Activated CD4-positive, alpha-beta T cell treated with anti-CD3 and anti-CD28 coated beads for 36 hours (primary cell): ENCODE measurements at regions of chr17 and their contacts with region 1.

Region 1: GRCh38 chr17:82098072-82098821 is at the start of gene FASN:
- DNase-seq: peak; percentile 97
- ATAC-seq: peak; percentile 86
- H3K4me3 Mint-ChIP-seq: peak within 1 kb of the TSS; percentile 78
- H3K27ac Mint-ChIP-seq: peak within 1 kb of the TSS; percentile 19
- H3K4me1 Mint-ChIP-seq: peaks cover 14% of the 10 kb centered on the region
- H3K27me3 Mint-ChIP-seq: no peaks in the 10 kb centered on the region
- total RNA-seq, gene FASN: 239 to 259 TPM

Region 2: DNA sequence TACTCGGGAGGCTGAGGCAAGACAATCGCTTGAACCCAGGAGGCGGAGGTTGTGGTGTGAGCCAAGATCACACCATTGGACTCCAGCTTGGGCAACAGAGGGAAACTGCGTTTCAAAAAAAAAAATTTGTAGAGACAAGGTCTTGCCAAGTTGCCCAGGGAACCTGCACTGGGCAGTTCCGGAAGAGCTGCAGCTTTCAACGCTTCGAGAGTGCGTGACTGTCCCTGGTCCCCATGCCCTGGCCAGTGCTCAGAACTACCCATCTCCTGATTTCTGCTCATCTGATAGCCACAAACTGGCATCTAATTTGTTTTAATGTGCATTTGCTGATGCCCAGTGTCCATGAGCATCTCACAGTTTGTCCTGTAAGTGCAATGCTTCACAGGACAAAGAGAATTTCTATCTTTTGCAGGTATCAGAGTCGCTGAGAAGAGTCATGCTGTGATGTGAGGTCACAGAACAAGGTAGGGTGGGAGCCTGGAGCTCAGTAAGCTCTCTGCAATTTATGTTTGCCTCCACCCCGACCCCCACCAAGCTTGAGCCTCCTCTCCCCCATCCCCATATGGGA is 589.5 kb before region 1 on chr17:
- CTCF ChIA-PET with region 1: no interaction called
- POLR2A ChIA-PET with region 1: no interaction called
- intact Hi-C with region 1: no loop called
- DNase-seq: peak; percentile 22
- ATAC-seq: no peak
- H3K4me3 Mint-ChIP-seq: peak overlapping the region; percentile 97
- H3K27ac Mint-ChIP-seq: peak overlapping the region; percentile 86
- H3K4me1 Mint-ChIP-seq: peaks cover 12% of the 10 kb centered on the region
- H3K27me3 Mint-ChIP-seq: no peaks in the 10 kb centered on the region

Region 3: GRCh38 chr17:81833160-81833920 is 264.9 kb before region 1 on chr17 and contains the start of gene MCRIP1:
- CTCF ChIA-PET with region 1: no interaction called
- POLR2A ChIA-PET with region 1: no interaction called
- intact Hi-C with region 1: loop called in 1 of 2 experiments (anchors 1 kb)
- DNase-seq: peak; percentile 98
- ATAC-seq: peak; percentile 78
- H3K4me3 Mint-ChIP-seq: peak within 1 kb of the TSS; percentile 87
- H3K27ac Mint-ChIP-seq: peak within 1 kb of the TSS; percentile 91
- H3K4me1 Mint-ChIP-seq: peaks cover 17% of the 10 kb centered on the region
- H3K27me3 Mint-ChIP-seq: no peaks in the 10 kb centered on the region
- total RNA-seq, gene MCRIP1: 45.8 to 50.4 TPM

Region 4: GRCh38 chr17:81917565-81918332 is 180.5 kb before region 1 on chr17 and contains the start of gene SIRT7:
- CTCF ChIA-PET with region 1: no interaction called
- POLR2A ChIA-PET with region 1: no interaction called
- intact Hi-C with region 1: loop called in 1 of 2 experiments (anchors 2 kb)
- DNase-seq: peak; percentile 90
- ATAC-seq: peak; percentile 87
- H3K4me3 Mint-ChIP-seq: peak within 1 kb of the TSS; percentile 85
- H3K27ac Mint-ChIP-seq: peak within 1 kb of the TSS; percentile 82
- H3K4me1 Mint-ChIP-seq: peaks cover 23% of the 10 kb centered on the region
- H3K27me3 Mint-ChIP-seq: no peaks in the 10 kb centered on the region
- total RNA-seq, gene SIRT7: 29.3 to 31.8 TPM

Region 5: GRCh38 chr17:82022981-82023374 is 75.3 kb before region 1 on chr17 and contains the start of gene LRRC45:
- CTCF ChIA-PET with region 1: interaction called, 3 read pairs
- POLR2A ChIA-PET with region 1: interaction called, 3 read pairs
- intact Hi-C with region 1: loop called in 1 of 2 experiments (anchors 1 kb)
- DNase-seq: peak; percentile 100
- ATAC-seq: peak; percentile 97
- H3K4me3 Mint-ChIP-seq: peak within 1 kb of the TSS; percentile 84
- H3K27ac Mint-ChIP-seq: peak within 1 kb of the TSS; percentile 76
- H3K4me1 Mint-ChIP-seq: peaks cover 14% of the 10 kb centered on the region
- H3K27me3 Mint-ChIP-seq: no peaks in the 10 kb centered on the region
- total RNA-seq, gene LRRC45: 17.6 to 20.6 TPM

Region 6: GRCh38 chr17:82043507-82043906 is 54.7 kb before region 1 on chr17:
- CTCF ChIA-PET with region 1: no interaction called
- POLR2A ChIA-PET with region 1: no interaction called
- intact Hi-C with region 1: no loop called
- DNase-seq: no peak
- ATAC-seq: no peak
- H3K4me3 Mint-ChIP-seq: no peak overlapping the region
- H3K27ac Mint-ChIP-seq: no peak overlapping the region
- H3K4me1 Mint-ChIP-seq: peaks cover 8% of the 10 kb centered on the region
- H3K27me3 Mint-ChIP-seq: no peaks in the 10 kb centered on the region

Region 7: GRCh38 chr17:82126556-82127314 is 28.5 kb after region 1 on chr17:
- CTCF ChIA-PET with region 1: interaction called, 4 read pairs
- POLR2A ChIA-PET with region 1: interaction called, 5 read pairs
- intact Hi-C with region 1: loop called in 1 of 2 experiments (anchors 1 kb)
- DNase-seq: peak; percentile 85
- ATAC-seq: peak; percentile 92
- H3K4me3 Mint-ChIP-seq: peak overlapping the region; percentile 72
- H3K27ac Mint-ChIP-seq: peak overlapping the region; percentile 98
- H3K4me1 Mint-ChIP-seq: peaks cover 61% of the 10 kb centered on the region
- H3K27me3 Mint-ChIP-seq: no peaks in the 10 kb centered on the region

Region 8: GRCh38 chr17:82297714-82298537 is 199.7 kb after region 1 on chr17:
- CTCF ChIA-PET with region 1: no interaction called
- POLR2A ChIA-PET with region 1: no interaction called
- intact Hi-C with region 1: loop called in 1 of 2 experiments (anchors 1 kb)
- DNase-seq: peak; percentile 96
- ATAC-seq: peak; percentile 62
- H3K4me3 Mint-ChIP-seq: peak overlapping the region; percentile 80
- H3K27ac Mint-ChIP-seq: peak overlapping the region; percentile 100
- H3K4me1 Mint-ChIP-seq: peaks cover 70% of the 10 kb centered on the region
- H3K27me3 Mint-ChIP-seq: no peaks in the 10 kb centered on the region